Adrenal gland (tissue), 19 donors: ENCODE measurements at regions of chr20 and their contacts with region 1.

Region 1: GRCh38 chr20:44310664-44311639 is at the start of gene FITM2:
- DNase-seq: peak; percentile 98 to 99 (median 99)
- H3K4me3 ChIP-seq: peak within 1 kb of the TSS; percentile 67 to 95 (median 74)
- H3K27ac ChIP-seq: peak within 1 kb of the TSS; percentile 5 to 86 (median 67)
- H3K4me1 ChIP-seq: peaks cover 13 to 17% of the 10 kb centered on the region in 2 donors
- H3K27me3 ChIP-seq: no peaks in the 10 kb centered on the region
- CTCF ChIP-seq: peak; percentile 91 to 98 (median 94)
- POLR2A ChIP-seq: peak in 1 of 2 donors; percentile 62
- total RNA-seq, gene FITM2: 14.5 to 33.4 (median 19.0) TPM

Region 2: DNA sequence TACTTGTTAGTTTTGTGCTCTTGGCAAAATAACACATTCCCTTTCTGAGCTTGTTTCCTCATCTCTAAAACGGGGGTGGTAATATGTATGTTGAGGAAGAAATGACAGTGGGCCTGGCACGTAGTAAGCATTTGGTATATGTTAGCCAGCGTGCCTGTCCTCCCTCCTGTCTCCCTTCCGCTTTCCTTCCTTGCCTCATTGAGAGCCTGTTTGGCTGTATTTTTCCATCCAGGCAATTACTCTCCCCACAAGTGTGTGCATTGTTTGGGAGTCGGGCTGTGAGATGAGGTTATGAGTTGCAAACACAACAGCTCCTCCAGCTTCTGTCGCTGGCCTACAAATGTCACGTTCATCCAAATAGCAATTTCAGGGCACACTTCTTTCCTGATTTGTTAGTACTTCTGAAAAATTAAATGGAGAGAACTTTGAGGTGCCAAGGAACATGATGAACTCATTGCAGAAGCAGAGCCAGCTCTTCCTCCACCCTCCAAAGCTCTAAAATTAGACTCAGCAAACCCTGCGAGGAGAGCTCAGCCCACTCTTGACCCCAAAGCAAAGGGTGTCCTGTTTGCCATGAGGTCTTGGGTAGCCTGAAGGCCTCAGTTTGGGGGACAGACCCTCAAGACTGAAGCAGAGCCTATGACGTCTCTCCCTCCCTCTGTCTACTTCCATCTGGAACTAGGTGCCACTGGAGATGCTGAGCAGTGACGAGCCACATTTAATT is 447.0 kb before region 1 on chr20:
- intact Hi-C with region 1: no loop called
- DNase-seq: no peak
- H3K4me3 ChIP-seq: no peak overlapping the region
- H3K27ac ChIP-seq: no peak overlapping the region
- H3K4me1 ChIP-seq: no peaks in the 10 kb centered on the region
- H3K27me3 ChIP-seq: no peaks in the 10 kb centered on the region
- CTCF ChIP-seq: no peak
- POLR2A ChIP-seq: no peak

Region 3: DNA sequence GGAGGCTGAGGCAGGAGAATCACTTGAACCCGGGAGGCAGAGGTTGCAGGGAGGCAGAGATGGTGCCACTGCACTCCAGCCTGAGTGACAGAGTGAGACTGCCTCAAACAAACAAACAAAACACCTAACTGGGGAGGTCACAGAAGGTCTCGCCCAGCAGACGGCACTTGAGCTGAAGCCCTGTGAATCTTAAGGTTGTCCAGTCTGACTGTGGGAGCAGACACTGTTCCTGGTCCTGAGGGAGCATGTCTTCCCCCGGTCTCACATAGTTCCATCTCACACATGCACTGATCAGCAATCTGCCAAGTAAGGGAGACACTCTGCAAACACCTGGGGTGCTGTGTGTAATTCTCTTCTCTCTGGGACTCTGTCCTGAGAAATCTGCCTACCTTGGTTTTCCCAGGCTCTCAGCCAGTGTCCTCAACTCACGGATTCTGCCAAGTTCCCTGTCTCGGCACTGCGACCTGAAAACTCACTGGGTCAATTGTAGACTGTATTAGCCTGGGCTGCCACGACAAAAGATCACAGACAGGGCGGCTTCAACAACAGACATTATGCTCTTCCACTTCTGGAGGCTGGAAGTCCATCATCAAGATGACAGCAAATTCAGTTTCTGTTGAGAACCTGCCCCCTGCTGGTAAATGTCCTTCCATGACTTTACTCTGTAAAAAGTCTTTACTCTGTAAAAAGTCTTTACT is 218.3 kb before region 1 on chr20:
- intact Hi-C with region 1: no loop called
- DNase-seq: peak in 2 of 7 donors; percentile 41 to 51
- H3K4me3 ChIP-seq: no peak overlapping the region
- H3K27ac ChIP-seq: no peak overlapping the region
- H3K4me1 ChIP-seq: no peaks in the 10 kb centered on the region
- H3K27me3 ChIP-seq: peaks cover 3% of the 10 kb centered on the region
- CTCF ChIP-seq: peak; percentile 13 to 58 (median 28)
- POLR2A ChIP-seq: no peak

Region 4: DNA sequence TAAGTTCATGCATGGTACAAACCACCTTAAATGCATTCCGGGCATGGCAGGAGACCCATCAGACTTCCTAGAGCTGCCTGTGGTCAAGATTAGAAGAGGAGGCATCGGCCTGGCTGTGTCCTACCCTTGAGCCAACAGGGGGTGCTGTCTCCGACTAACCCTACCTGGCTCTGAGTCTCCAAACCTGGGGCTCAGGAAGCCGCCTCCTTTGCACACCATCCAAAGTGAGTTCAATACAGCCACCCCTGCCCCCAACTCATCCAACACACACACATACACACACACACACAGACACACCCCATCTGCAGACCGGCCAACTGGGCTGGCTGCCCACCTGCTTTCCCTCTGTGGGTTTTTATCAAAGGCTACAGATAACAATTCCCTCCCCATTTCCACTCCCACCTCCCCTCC is 201.0 kb before region 1 on chr20:
- intact Hi-C with region 1: loop called in 1 of 2 experiments (anchors 5 kb)
- DNase-seq: no peak
- H3K4me3 ChIP-seq: no peak overlapping the region
- H3K27ac ChIP-seq: no peak overlapping the region
- H3K4me1 ChIP-seq: no peaks in the 10 kb centered on the region
- H3K27me3 ChIP-seq: peaks cover 3% of the 10 kb centered on the region
- CTCF ChIP-seq: no peak
- POLR2A ChIP-seq: no peak

Region 5: GRCh38 chr20:44196271-44196670 is 114.7 kb before region 1 on chr20:
- intact Hi-C with region 1: no loop called
- DNase-seq: no peak
- H3K4me3 ChIP-seq: no peak overlapping the region
- H3K27ac ChIP-seq: no peak overlapping the region
- H3K4me1 ChIP-seq: no peaks in the 10 kb centered on the region
- H3K27me3 ChIP-seq: no peaks in the 10 kb centered on the region
- CTCF ChIP-seq: no peak
- POLR2A ChIP-seq: no peak

Region 6: GRCh38 chr20:44217342-44218092 is 93.4 kb before region 1 on chr20:
- intact Hi-C with region 1: loop called (anchors 2 to 5 kb)
- DNase-seq: peak; percentile 65 to 88 (median 79)
- H3K4me3 ChIP-seq: no peak overlapping the region
- H3K27ac ChIP-seq: no peak overlapping the region
- H3K4me1 ChIP-seq: no peaks in the 10 kb centered on the region
- H3K27me3 ChIP-seq: no peaks in the 10 kb centered on the region
- CTCF ChIP-seq: peak; percentile 80 to 91 (median 88)
- POLR2A ChIP-seq: no peak